ENCODE measurements at regions of chr1 and their contacts with region 1.

Region 1: DNA sequence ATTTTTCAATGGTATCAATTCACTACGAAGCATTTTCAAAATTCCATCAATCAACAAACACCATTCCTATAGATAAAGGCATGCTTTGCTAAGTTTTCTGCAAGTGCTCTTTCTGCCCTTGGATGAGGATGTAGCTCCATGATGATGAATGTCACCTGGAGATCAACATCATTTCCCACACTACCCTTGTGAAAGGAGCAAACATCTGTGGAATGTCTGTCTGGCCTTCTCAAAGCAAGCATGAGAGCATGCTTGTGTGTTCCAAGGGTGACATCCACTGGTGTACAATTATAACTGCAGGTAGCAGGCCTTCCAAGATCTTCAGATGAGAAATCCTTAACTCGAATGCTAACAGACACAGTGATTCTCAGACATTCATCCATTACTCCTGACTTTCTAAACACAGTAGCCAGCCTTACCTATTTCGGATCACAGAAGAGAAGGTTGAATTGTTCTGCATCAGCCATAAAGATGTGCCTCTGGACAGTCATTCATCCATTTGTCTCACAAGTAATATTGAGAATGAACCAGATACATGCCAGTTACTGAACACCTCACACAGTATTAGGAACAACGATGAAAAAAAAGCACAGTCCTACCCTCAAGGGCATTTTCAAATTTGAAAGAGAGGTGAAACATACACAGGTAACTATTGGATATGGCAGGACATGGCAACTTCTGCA is 162.4 kb downstream of the TPR start:
- DNase-seq: no peak
- H3K4me3 ChIP-seq: no peak overlapping the region
- H3K27ac ChIP-seq: no peak overlapping the region
- H3K4me1 ChIP-seq: peaks cover 0 to 7% (median 4%) of the 10 kb centered on the region in 3 donors
- H3K27me3 ChIP-seq: no peaks in the 10 kb centered on the region
- CTCF ChIP-seq: peak; percentile 21 to 92 (median 73)
- POLR2A ChIP-seq: no peak

Region 2: GRCh38 chr1:184691719-184692324 is 1520.9 kb before region 1 on chr1:
- intact Hi-C with region 1: no loop called
- DNase-seq: no peak
- H3K4me3 ChIP-seq: no peak overlapping the region
- H3K27ac ChIP-seq: no peak overlapping the region
- H3K4me1 ChIP-seq: no peaks in the 10 kb centered on the region
- H3K27me3 ChIP-seq: no peaks in the 10 kb centered on the region
- CTCF ChIP-seq: peak in 5 of 6 experiments; percentile 37 to 73 (median 68)
- POLR2A ChIP-seq: no peak

Region 3: DNA sequence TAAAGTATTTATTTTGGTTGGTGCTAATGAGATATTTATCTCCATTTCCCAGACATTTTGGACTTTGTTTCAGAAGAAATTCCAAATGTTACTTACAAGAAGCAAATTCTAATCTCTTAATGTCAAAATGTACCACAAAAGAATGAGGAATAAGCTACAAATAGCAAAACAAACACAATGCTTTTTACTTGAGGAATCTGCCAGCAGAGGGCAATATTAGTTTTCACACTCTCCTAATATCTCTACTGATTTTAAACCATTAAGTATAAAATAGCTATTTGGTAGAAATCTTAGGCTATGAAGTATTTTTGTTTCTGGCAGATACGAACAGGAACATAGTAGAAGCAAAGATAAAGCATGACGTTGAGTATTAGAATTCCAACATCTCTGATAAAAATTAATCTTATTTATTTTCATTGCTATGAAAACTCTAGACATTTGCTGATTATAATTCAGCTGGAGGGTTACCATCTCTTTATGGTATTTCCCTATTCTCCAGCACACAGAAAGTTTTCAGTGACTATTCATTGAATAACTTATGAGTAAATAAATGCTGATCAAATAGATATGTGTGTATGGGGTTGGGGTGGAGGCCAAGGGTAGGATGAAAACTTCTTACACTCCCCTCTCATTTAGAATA is 491.9 kb before region 1 on chr1:
- intact Hi-C with region 1: loop called (anchors 10 kb)
- DNase-seq: no peak
- H3K4me3 ChIP-seq: no peak overlapping the region
- H3K27ac ChIP-seq: no peak overlapping the region
- H3K4me1 ChIP-seq: peaks cover 0 to 24% (median 4%) of the 10 kb centered on the region in 3 donors
- H3K27me3 ChIP-seq: no peaks in the 10 kb centered on the region
- CTCF ChIP-seq: peak in 5 of 6 experiments; percentile 34 to 64 (median 51)
- POLR2A ChIP-seq: no peak

Region 4: DNA sequence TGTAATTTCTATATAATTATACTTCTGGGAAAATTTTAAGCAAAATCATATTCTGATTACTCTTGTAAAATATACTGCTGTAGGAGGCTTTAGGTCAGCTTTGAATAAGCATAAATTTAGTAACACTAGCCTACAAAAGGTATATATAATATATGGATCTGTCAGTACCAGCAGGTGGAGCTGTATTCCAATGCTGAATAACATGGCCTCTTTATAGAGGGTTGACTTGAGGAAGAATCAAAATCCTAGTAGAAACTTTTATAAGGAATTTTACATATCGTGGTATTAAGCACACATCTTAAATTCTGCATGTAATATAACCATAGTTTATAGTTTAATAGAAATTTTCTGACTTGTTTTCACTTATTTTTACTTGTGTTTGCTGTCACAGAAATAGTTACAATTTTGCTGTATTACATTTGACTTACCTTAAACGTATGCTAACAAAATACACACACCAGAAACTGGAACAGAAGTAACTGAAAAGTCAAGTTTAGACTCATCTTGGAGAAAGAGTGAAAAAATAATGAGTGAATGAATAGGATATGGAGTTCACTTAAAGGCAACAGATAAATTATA is 399.2 kb before region 1 on chr1:
- intact Hi-C with region 1: loop called (anchors 5 kb)
- DNase-seq: no peak
- H3K4me3 ChIP-seq: no peak overlapping the region
- H3K27ac ChIP-seq: no peak overlapping the region
- H3K4me1 ChIP-seq: no peaks in the 10 kb centered on the region
- H3K27me3 ChIP-seq: no peaks in the 10 kb centered on the region
- CTCF ChIP-seq: peak in 5 of 6 experiments; percentile 47 to 73 (median 55)
- POLR2A ChIP-seq: no peak

Region 5: DNA sequence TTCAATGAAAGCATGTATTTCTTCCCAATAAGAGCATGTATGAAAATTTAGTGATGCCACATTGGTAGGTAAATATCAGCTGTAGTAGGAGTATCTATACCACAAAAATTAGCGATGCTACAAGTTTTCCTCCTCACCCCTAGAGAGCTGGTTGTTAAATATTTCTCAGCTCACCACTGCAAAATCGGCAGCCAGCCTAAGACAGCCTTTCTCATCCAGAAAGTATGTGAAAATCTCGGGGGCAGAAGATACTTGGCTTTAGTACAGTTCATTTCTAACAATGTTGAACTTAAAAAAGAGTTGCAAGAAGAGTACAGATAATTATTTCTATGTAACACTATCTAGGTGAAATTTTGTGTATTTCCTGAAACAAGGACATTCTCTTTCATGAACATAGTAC is 73.0 kb before region 1 on chr1:
- intact Hi-C with region 1: loop called (anchors 10 kb)
- DNase-seq: no peak
- H3K4me3 ChIP-seq: no peak overlapping the region
- H3K27ac ChIP-seq: peak overlapping the region in 2 of 4 donors; percentile 34 to 66
- H3K4me1 ChIP-seq: no peaks in the 10 kb centered on the region
- H3K27me3 ChIP-seq: no peaks in the 10 kb centered on the region
- CTCF ChIP-seq: no peak
- POLR2A ChIP-seq: no peak